PC-3 (cell line): ENCODE measurements at regions of chr1 and their contacts with region 1.

Region 1: GRCh38 chr1:20430355-20431175 is 55.4 kb downstream of the CAMK2N1 start:
- DNase-seq: peak; percentile 47
- ATAC-seq: peak; percentile 47; the same call in 1 of the 2 replicates
- H3K4me3 ChIP-seq: no peak overlapping the region
- H3K27ac ChIP-seq: no peak overlapping the region
- H3K4me1 ChIP-seq: peaks cover 13% of the 10 kb centered on the region
- H3K27me3 ChIP-seq: no peaks in the 10 kb centered on the region
- CTCF ChIP-seq: peak; percentile 94

Region 2: GRCh38 chr1:20376880-20377494 is 53.6 kb before region 1 on chr1:
- CTCF ChIA-PET with region 1: interaction called, 3 read pairs
- POLR2A ChIA-PET with region 1: no interaction called
- intact Hi-C with region 1: loop called (anchors 1 kb)
- DNase-seq: peak; percentile 62
- ATAC-seq: peak; percentile 56
- H3K4me3 ChIP-seq: no peak overlapping the region
- H3K27ac ChIP-seq: no peak overlapping the region
- H3K4me1 ChIP-seq: peaks cover 24% of the 10 kb centered on the region
- H3K27me3 ChIP-seq: no peaks in the 10 kb centered on the region
- CTCF ChIP-seq: peak; percentile 82

Region 3: DNA sequence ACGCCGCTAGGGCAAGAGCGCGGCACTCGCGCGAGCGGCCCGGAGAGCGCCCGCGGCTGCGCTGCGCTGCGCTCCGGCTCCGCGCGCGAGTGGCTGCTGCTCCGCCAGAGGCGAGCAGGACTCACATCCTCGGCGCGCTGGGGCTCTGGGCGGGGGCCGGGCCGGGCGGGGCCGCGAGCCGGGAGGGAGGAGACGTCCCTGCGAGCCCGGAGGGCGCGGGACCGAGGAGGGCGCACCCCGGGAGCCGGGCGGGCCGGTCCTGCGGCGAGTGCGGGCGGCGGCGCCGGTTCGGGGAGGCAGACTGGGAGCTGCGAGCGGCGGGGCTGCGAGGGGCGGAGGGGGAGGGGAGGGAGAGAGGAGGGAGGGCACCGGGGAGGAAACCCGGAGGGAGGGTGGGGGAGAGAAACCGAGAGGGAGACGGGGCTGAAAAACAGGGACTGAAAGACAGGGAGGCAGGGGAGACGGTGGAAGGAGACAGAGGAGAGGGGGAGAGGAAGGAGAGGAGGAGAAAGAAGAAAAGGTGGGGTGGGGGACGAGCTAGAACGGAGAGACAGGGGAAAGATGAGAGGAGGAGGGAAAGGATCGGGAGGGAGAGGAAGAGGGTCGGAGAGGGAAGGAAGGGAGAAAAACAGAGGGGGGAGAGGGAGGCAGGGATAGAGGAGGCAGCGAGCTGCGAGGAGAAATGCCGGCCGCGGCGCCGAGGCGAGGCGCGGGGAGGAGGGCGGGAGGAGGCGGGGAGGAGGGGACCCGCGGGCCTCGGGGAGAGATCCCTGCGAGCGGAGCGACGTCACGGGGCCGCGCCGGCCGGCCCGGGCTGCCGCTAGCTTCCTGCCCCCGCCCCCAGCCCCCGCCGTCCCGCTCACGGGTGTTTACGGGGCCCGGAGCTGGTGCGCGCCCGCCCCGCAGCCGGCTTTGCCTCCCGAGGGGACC is 55.2 kb after region 1 on chr1 and contains the start of gene CAMK2N1:
- CTCF ChIA-PET with region 1: interaction called, 13 read pairs
- POLR2A ChIA-PET with region 1: no interaction called
- intact Hi-C with region 1: no loop called
- DNase-seq: peak; percentile 73
- ATAC-seq: peak; percentile 54
- H3K4me3 ChIP-seq: peak within 1 kb of the TSS; percentile 98
- H3K27ac ChIP-seq: peak within 1 kb of the TSS; percentile 87
- H3K4me1 ChIP-seq: peaks cover 32% of the 10 kb centered on the region
- H3K27me3 ChIP-seq: peaks cover 6% of the 10 kb centered on the region
- CTCF ChIP-seq: no peak
- total RNA-seq, gene CAMK2N1: 51.2 and 56.9 TPM in 2 replicates